Stomach (tissue), 19 donors: ENCODE measurements at regions of chrX and their contacts with region 1.

Region 1: GRCh38 chrX:3651276-3651675 is 62.2 kb downstream of the PRKX start:
- DNase-seq: peak in 1 of 2 donors; percentile 57
- H3K4me3 ChIP-seq: no peak overlapping the region
- H3K27ac ChIP-seq: no peak overlapping the region
- H3K4me1 ChIP-seq: no peaks in the 10 kb centered on the region
- H3K27me3 ChIP-seq: no peaks in the 10 kb centered on the region
- CTCF ChIP-seq: peak in 4 of 7 experiments; percentile 19 to 56 (median 35)
- EP300 ChIP-seq: no peak
- POLR2A ChIP-seq: no peak

Region 2: GRCh38 chrX:3811331-3812311 is 160.3 kb after region 1 on chrX:
- intact Hi-C with region 1: loop called (anchors 5 kb)
- DNase-seq: peak; percentile 31 to 81
- H3K4me3 ChIP-seq: no peak overlapping the region
- H3K27ac ChIP-seq: no peak overlapping the region
- H3K4me1 ChIP-seq: peaks cover 0 to 24% (median 7%) of the 10 kb centered on the region in 4 donors
- H3K27me3 ChIP-seq: peaks cover 0 to 14% (median 11%) of the 10 kb centered on the region in 3 donors
- CTCF ChIP-seq: peak in 3 of 7 experiments; percentile 43 to 69 (median 53)
- EP300 ChIP-seq: no peak
- POLR2A ChIP-seq: no peak